Transverse colon (tissue), 4 donors: ENCODE measurements at regions of chr3 and their contacts with region 1.

Region 1: GRCh38 chr3:93867425-93867824 is 106.3 kb downstream of the PROS1 start:
- DNase-seq: no peak
- H3K4me3 ChIP-seq: no peak overlapping the region
- H3K27ac ChIP-seq: no peak overlapping the region
- H3K4me1 ChIP-seq: no peaks in the 10 kb centered on the region
- H3K27me3 ChIP-seq: no peaks in the 10 kb centered on the region
- CTCF ChIP-seq: no peak
- EP300 ChIP-seq: no peak
- POLR2A ChIP-seq: no peak

Region 2: GRCh38 chr3:93843981-93844380 is 23.4 kb before region 1 on chr3:
- in situ Hi-C with region 1: no loop called
- intact Hi-C with region 1: loop called (anchors 2 kb)
- DNase-seq: no peak
- H3K4me3 ChIP-seq: no peak overlapping the region
- H3K27ac ChIP-seq: no peak overlapping the region
- H3K4me1 ChIP-seq: peaks cover 0 to 3% (median 0%) of the 10 kb centered on the region in 4 donors
- H3K27me3 ChIP-seq: no peaks in the 10 kb centered on the region
- CTCF ChIP-seq: no peak
- EP300 ChIP-seq: no peak
- POLR2A ChIP-seq: no peak

Region 3: DNA sequence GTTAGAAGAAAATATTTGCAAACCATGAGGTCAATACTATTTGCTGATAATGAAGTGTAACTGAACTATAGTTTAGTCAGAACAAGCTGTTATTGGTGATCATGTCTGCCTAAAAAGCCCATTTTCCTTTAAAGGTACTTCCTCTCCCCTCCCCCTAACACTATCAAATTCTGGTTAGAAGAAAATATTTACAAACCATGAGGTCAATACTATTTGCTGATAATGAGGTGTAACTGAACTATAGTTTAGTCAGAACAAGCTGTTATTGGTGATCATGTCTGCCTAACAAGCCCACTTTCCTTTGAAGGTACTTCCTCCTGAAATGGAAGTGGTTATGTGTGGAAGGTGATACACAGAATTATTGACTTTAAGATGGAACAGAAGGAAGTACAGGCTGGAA is 59.4 kb after region 1 on chr3:
- in situ Hi-C with region 1: no loop called
- intact Hi-C with region 1: loop called (anchors 2 kb)
- DNase-seq: no peak
- H3K4me3 ChIP-seq: no peak overlapping the region
- H3K27ac ChIP-seq: no peak overlapping the region
- H3K4me1 ChIP-seq: no peaks in the 10 kb centered on the region
- H3K27me3 ChIP-seq: no peaks in the 10 kb centered on the region
- CTCF ChIP-seq: no peak
- EP300 ChIP-seq: no peak
- POLR2A ChIP-seq: no peak